Activated CD8-positive, alpha-beta T cell treated with anti-CD3 and anti-CD28 coated beads for 36 hours (primary cell): ENCODE measurements at regions of chr2 and their contacts with region 1.

Region 1: DNA sequence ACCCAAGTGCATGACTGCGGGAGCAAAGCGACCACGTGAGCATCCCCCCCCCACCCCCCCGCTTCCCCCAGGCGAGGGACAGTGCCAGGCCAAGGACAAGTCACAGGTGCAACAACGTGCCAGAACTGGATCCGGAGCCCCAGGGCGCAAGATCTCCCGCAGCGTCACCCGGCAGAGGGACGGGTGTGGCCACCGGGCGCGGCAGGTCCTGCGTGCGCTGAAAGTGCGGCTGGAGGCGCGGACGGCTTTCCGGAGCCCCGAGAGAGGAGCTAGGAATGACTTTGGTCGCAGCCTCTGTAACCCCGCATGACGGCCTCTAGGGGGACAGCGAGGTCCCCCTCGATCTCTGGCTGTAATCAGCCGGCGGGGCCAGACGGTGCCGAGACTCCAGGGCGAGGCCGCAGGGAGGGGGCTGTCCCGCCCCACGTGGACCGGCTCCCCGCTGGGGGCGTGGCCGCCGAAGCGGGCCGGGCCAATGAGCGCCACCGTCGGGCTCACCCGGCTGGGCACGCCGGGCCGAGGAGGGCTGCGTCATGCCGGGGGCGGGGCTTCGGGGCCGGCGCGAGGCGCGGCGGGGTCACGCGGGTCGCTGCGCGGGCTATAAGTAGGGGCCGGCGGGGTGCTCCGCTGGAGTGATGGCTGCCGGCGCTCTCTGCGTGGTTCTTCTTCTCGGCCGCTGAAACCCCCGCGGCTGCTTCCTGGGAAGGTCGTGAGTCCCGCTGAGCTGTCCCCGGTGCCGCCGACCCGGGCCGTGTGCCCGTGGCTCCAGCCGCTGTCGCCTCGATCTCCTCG is at the start of gene SLC20A1:
- DNase-seq: peak; percentile 95
- ATAC-seq: peak; percentile 93
- H3K4me3 Mint-ChIP-seq: peak within 1 kb of the TSS; percentile 95
- H3K27ac Mint-ChIP-seq: peak within 1 kb of the TSS; percentile 88
- H3K4me1 Mint-ChIP-seq: peaks cover 55% of the 10 kb centered on the region
- H3K27me3 Mint-ChIP-seq: no peaks in the 10 kb centered on the region
- CTCF ChIP-seq: no peak
- total RNA-seq, gene SLC20A1: 52.7 to 52.8 TPM

Region 2: DNA sequence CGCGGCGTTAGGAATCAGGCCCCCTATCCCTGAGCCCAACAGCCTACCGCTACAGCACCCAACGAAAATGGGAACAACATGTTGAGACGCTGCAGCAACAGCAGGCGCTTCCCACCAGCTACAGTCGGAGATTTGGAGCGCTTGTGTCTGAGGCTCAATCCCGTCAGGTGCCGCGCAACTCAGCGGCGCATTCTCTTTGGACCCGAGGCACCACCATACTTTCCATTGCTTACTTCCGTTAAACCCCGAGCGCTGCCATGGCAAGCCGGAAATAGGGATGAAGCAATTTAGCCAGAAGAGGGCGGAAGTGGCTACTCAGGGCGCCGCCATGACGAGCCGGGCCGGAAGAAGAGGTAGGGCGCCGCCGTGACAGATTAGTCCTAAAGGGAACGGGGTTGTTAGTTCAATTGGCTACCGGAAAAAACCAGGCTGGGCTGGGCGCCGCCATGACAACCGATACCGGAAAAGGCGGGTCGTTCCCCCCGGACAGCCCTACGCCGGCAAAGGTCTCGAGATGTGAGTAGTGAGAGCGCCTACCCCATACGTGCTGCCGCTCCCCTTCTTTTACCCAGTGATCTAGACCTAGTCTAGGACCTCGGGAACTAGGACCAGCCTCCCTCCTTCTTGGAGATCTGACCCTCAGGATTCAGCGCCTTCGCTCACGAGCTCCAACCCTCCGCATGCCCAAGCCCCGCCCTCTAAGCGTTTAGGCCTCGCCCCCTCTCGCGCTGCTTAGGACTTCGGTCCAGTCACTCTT is 61.2 kb before region 1 on chr2 and contains the start of gene CHCHD5:
- CTCF ChIA-PET with region 1: no interaction called
- POLR2A ChIA-PET with region 1: interaction called, 13 read pairs
- intact Hi-C with region 1: no loop called
- DNase-seq: peak; percentile 98
- ATAC-seq: peak; percentile 88
- H3K4me3 Mint-ChIP-seq: peak within 1 kb of the TSS; percentile 93
- H3K27ac Mint-ChIP-seq: peak within 1 kb of the TSS; percentile 99
- H3K4me1 Mint-ChIP-seq: peaks cover 31% of the 10 kb centered on the region
- H3K27me3 Mint-ChIP-seq: no peaks in the 10 kb centered on the region
- CTCF ChIP-seq: no peak
- total RNA-seq, gene CHCHD5: 34.8 to 37.5 TPM

Region 3: DNA sequence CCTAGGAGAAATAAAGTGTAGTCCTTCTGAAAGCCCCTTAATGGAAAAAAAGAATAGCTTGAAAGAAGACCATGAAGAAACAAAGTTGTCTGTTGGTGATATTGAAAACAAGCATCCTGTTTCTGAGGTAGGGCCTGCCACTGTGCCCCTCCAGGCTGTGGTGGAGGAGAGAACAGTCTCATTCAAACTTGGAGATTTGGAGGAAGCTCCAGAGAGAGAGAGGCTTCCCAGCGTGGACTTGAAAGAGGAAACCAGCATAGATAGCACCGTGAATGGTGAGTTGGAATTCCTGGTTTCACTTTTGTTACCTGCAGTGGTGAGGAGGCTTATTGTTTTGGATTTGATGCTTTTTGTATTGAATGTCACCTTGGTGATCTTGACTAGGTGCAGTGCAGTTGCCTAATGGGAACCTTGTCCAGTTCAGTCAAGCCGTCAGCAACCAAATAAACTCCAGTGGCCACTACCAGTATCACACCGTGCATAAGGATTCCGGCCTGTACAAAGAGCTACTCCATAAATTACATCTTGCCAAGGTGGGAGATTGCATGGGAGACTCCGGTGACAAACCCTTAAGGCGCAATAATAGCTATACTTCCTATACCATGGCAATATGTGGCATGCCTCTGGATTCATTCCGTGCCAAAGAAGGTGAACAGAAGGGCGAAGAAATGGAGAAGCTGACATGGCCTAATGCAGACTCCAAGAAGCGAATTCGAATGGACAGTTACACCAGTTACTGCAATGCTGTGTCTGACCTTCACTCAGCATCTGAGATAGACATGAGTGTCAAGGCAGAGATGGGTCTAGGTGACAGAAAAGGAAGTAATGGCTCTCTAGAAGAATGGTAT is 13.5 kb after region 1 on chr2:
- CTCF ChIA-PET with region 1: interaction called, 9 read pairs
- POLR2A ChIA-PET with region 1: interaction called, 68 read pairs
- intact Hi-C with region 1: no loop called
- DNase-seq: no peak
- ATAC-seq: no peak
- H3K4me3 Mint-ChIP-seq: no peak overlapping the region
- H3K27ac Mint-ChIP-seq: peak overlapping the region; percentile 64
- H3K4me1 Mint-ChIP-seq: peaks cover 52% of the 10 kb centered on the region
- H3K27me3 Mint-ChIP-seq: no peaks in the 10 kb centered on the region
- CTCF ChIP-seq: no peak

Region 4: DNA sequence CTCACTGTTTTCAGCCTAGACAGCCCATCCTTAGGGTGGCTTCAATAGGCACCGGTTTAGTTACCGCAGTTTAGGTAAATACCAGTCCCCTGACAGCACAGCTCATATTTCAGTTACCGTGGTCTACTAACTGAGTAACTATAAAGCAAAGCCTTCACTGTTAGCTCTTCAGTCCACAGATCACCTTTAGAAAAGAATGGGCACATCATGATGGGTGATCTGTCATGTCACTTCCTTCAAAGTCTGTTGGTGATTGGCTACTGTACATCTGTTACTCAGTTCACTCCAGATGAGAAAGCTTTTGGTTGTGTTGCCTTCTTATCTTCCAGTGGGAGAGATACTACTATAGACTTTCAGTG is 21.2 kb after region 1 on chr2:
- CTCF ChIA-PET with region 1: interaction called, 4 read pairs
- POLR2A ChIA-PET with region 1: interaction called, 27 read pairs
- intact Hi-C with region 1: no loop called
- DNase-seq: no peak
- ATAC-seq: no peak
- H3K4me3 Mint-ChIP-seq: no peak overlapping the region
- H3K27ac Mint-ChIP-seq: no peak overlapping the region
- H3K4me1 Mint-ChIP-seq: no peaks in the 10 kb centered on the region
- H3K27me3 Mint-ChIP-seq: no peaks in the 10 kb centered on the region
- CTCF ChIP-seq: no peak

Region 5: DNA sequence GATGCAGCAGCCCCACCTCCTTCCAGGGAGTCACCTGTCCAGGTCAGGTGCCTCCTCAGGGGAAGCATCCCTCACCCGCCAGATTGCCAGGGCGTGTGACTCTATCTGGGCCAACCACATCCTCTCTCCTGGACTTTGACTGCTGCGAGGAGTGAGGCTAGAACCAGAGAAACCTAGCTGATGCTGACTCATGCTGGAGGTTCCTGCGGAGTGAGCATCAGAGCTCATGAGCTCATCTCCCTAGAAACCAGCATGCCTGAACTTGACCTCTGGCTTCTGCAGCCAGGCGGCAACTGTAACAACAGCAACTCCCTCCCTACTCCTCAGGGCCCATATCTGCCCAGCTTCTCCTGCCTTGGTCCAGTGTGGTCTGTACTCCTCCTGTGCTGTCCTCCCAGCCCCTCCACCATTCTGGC is 47.0 kb after region 1 on chr2:
- CTCF ChIA-PET with region 1: interaction called, 3 read pairs
- POLR2A ChIA-PET with region 1: interaction called, 10 read pairs
- intact Hi-C with region 1: no loop called
- DNase-seq: peak; percentile 83
- ATAC-seq: peak; percentile 91
- H3K4me3 Mint-ChIP-seq: no peak overlapping the region
- H3K27ac Mint-ChIP-seq: peak overlapping the region; percentile 59
- H3K4me1 Mint-ChIP-seq: peaks cover 29% of the 10 kb centered on the region
- H3K27me3 Mint-ChIP-seq: no peaks in the 10 kb centered on the region
- CTCF ChIP-seq: no peak